ENCODE measurements at regions of chr19 and their contacts with region 1.

Region 1: GRCh38 chr19:46661020-46661731 is at the start of gene DACT3:
- DNase-seq: peak; percentile 98 to 100 (median 100)
- ATAC-seq: peak; percentile 86 to 95 (median 94)
- H3K4me3 ChIP-seq: peak within 1 kb of the TSS; percentile 57 to 77
- H3K4me3 Mint-ChIP-seq: peak within 1 kb of the TSS; percentile 79 to 81 (median 80)
- H3K27ac ChIP-seq: peak within 1 kb of the TSS; percentile 44
- H3K27ac Mint-ChIP-seq: peak within 1 kb of the TSS; percentile 82 to 87
- H3K4me1 ChIP-seq: peaks cover 15 to 30% of the 10 kb centered on the region in 2 experiments
- H3K4me1 Mint-ChIP-seq: peaks cover 18 to 27% (median 23%) of the 10 kb centered on the region in 3 donors
- H3K27me3 ChIP-seq: peaks cover 2 to 40% of the 10 kb centered on the region in 2 experiments
- H3K27me3 Mint-ChIP-seq: peaks cover 17 to 22% of the 10 kb centered on the region in 2 donors
- total RNA-seq, gene DACT3: 0.15 to 0.56 (median 0.37) TPM

Region 2: DNA sequence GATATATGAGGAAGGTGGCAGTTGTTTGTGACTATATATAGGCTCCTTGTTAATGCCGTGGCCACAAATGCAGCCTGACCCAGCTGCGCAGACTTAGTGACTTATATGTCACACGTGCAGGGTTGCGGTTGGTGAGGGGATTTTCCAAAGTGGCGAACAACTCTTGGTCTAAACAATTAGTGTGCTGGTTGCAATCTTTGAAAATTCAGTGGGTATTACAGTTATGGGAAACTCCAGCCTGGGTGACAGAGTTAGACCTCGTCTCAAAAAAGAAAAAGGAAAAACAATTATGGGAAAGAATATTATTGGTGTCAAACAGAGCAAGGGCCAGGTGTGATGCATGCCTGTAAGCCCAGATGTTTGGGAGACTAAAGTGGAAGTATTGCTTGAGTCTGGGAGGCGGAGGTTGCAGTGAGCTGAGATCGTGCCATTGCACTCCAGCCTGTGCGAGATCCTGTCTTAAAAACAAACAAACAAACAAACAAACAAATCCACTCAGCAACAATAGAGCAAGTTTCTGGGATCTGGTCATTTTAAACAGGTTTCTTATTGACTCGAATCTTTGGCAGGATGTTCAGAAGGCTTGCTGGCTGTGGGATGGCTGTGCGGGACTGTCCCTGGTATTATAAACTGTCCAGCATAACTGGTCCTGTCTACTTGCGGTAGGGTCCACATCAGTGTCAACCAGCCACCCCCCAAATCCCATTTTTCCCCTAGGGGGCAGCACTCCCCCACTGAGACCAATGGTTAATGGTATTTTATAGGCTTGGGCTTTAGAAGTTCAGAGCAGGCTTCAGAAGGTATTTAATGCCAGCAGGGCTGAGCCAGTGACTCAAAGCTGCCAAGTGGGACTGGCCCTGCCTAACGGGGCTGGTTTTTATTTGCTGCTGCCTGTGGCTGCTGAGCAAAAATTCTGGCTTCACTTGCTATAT is 1644.5 kb before region 1 on chr19:
- CTCF ChIA-PET with region 1: no interaction called
- POLR2A ChIA-PET with region 1: interaction called in 1 of 2 experiments, 11 read pairs
- DNase-seq: peak; percentile 50 to 92 (median 74)
- ATAC-seq: peak; percentile 69 to 84 (median 74)
- H3K4me3 ChIP-seq: no peak overlapping the region
- H3K4me3 Mint-ChIP-seq: peak overlapping the region; percentile 10 to 65 (median 60)
- H3K27ac ChIP-seq: peak overlapping the region; percentile 87
- H3K27ac Mint-ChIP-seq: peak overlapping the region; percentile 87 to 89
- H3K4me1 ChIP-seq: peaks cover 0 to 20% of the 10 kb centered on the region in 2 experiments
- H3K4me1 Mint-ChIP-seq: peaks cover 7 to 14% (median 11%) of the 10 kb centered on the region in 3 donors
- H3K27me3 ChIP-seq: no peaks in the 10 kb centered on the region
- H3K27me3 Mint-ChIP-seq: no peaks in the 10 kb centered on the region

Region 3: DNA sequence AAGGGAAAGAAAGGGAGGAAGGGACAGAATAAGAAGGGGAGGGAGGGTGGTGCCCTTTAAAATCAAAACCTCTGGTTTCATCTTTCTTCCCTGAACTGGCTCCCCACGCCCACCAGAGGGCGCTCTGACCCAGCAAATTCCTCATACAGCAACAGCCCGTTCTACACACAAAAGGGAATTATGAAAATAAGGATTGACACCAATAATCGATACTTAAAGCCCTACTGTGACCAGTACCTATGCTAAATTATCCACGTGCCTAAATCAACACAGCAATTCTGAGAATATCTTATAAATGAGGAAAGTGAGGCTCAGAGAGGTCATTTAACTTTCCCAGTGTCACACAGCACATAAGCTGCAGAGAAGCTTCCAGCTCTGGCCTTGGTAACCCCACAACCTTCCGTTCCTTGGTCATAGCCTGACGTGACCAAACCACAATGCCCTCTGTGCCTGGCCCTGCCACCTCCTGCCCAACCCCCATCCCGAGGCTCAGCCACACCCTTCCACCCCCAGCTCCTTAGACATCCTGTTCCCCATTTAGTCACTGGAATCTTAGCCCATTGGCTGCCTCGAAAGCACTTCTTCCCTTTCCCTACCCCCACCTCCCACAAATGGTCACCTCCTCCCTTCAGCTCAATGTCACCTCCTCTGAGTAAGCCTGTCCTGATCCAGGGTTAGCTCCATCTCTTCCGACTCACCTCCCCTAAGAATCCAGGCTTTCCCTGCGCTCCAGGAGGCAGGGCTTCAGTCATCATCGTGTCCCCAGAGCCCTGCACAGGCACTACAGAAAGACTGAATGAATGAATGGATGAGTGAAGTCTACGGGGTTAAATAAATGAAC is 131.3 kb before region 1 on chr19:
- CTCF ChIA-PET with region 1: interaction called in 1 of 2 experiments, 14 read pairs
- POLR2A ChIA-PET with region 1: no interaction called
- DNase-seq: peak; percentile 38 to 88 (median 68)
- ATAC-seq: peak; percentile 68 to 88 (median 76)
- H3K4me3 ChIP-seq: no peak overlapping the region
- H3K4me3 Mint-ChIP-seq: no peak overlapping the region
- H3K27ac ChIP-seq: no peak overlapping the region
- H3K27ac Mint-ChIP-seq: peak overlapping the region; percentile 6 to 58
- H3K4me1 ChIP-seq: peaks cover 5 to 17% of the 10 kb centered on the region in 2 experiments
- H3K4me1 Mint-ChIP-seq: peaks cover 22 to 25% (median 23%) of the 10 kb centered on the region in 3 donors
- H3K27me3 ChIP-seq: peaks cover 0 to 33% of the 10 kb centered on the region in 2 experiments
- H3K27me3 Mint-ChIP-seq: no peaks in the 10 kb centered on the region

Region 4: DNA sequence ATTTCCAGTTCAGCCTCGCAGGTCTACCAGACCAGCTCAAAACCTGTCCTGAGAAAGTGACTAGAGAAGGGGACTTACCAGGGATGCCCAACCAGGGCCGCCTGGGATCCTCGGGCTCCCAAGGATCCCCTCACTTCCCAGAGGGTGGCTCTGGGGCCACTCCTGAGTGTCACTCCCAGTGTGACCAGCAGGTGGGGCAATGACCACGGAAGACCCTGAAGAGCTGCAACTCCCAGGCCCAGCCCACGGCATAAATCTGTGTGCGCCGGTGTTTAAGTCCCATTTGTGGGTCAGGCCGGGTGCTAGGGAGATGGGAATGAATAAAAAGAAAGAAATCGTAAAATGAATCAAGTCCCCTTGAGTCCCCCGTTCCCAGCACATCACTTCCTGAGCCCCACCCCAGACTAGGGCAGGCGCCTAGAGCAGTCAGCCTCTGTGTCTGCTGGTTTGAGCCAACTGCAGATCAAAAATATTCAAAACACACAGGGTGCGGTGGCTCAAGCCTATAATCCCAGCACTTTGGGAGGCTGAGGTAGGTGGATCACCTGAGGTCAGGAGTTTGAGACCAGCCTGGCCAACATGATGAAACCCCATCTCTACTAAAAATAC is 47.0 kb before region 1 on chr19:
- CTCF ChIA-PET with region 1: interaction called, 7 to 40 read pairs
- POLR2A ChIA-PET with region 1: interaction called in 1 of 2 experiments, 3 read pairs
- DNase-seq: peak in 34 of 35 experiments; percentile 54 to 88 (median 74)
- ATAC-seq: peak; percentile 53 to 59 (median 57)
- H3K4me3 ChIP-seq: no peak overlapping the region
- H3K4me3 Mint-ChIP-seq: peak overlapping the region in 2 of 3 donors; percentile 38 to 39
- H3K27ac ChIP-seq: peak overlapping the region; percentile 13
- H3K27ac Mint-ChIP-seq: peak overlapping the region; percentile 72 to 88
- H3K4me1 ChIP-seq: peaks cover 52 to 87% of the 10 kb centered on the region in 2 experiments
- H3K4me1 Mint-ChIP-seq: peaks cover 61 to 78% (median 71%) of the 10 kb centered on the region in 3 donors
- H3K27me3 ChIP-seq: peaks cover 0 to 5% of the 10 kb centered on the region in 2 experiments
- H3K27me3 Mint-ChIP-seq: no peaks in the 10 kb centered on the region

Region 5: GRCh38 chr19:46634045-46634655 is 27.0 kb before region 1 on chr19:
- CTCF ChIA-PET with region 1: interaction called, 3 to 12 read pairs
- POLR2A ChIA-PET with region 1: no interaction called
- DNase-seq: peak; percentile 90 to 98 (median 94)
- ATAC-seq: peak; percentile 72 to 81 (median 78)
- H3K4me3 ChIP-seq: peak overlapping the region; percentile 42 to 49
- H3K4me3 Mint-ChIP-seq: peak overlapping the region in 2 of 3 donors; percentile 72 to 74
- H3K27ac ChIP-seq: peak overlapping the region; percentile 79
- H3K27ac Mint-ChIP-seq: peak overlapping the region in 1 of 2 donors; percentile 65
- H3K4me1 ChIP-seq: peaks cover 26 to 50% of the 10 kb centered on the region in 2 experiments
- H3K4me1 Mint-ChIP-seq: peaks cover 14 to 23% (median 20%) of the 10 kb centered on the region in 3 donors
- H3K27me3 ChIP-seq: peaks cover 0 to 50% of the 10 kb centered on the region in 2 experiments
- H3K27me3 Mint-ChIP-seq: peaks cover 0 to 4% of the 10 kb centered on the region in 2 donors

Region 6: DNA sequence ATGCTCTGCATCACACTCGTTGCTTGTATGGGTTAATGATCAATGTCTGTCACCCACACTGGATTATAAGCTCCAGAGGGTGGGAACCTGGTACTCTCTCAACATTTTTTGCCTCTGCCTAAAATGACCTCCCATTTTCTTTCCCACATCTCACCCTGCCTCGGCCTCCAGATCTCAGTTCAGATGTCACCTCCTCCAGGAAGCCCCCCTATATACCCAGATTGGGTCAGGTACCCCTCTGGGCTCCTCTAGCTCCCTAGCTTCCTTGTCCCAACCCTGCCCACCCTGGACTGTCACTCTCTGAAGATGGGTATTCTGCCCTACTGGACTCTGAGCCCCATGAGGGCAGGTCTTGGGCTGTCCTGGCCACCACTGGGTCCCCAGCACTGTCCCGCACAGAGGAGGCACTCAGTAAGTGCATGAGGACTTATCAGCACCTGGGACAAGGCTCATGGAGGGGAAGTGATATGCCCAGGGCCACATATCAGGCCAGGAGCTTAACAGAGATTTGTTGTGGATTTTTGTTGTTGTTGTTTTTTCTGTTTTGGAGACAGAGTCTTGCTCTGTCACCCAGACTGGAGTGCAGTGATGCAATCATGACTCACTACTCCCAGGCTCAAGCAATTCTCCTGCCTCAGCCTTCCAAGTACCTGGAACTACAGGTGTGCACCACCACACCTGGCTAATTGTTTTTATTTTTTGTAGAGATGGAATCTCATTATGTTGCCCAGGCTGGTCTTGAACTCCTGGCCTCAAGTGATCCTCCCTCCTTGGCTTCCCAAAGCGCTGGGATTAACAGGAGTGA is 31.9 kb after region 1 on chr19:
- CTCF ChIA-PET with region 1: no interaction called
- POLR2A ChIA-PET with region 1: no interaction called
- DNase-seq: no peak
- ATAC-seq: no peak
- H3K4me3 ChIP-seq: no peak overlapping the region
- H3K4me3 Mint-ChIP-seq: no peak overlapping the region
- H3K27ac ChIP-seq: no peak overlapping the region
- H3K27ac Mint-ChIP-seq: peak overlapping the region; percentile 73 to 75
- H3K4me1 ChIP-seq: peaks cover 0 to 2% of the 10 kb centered on the region in 2 experiments
- H3K4me1 Mint-ChIP-seq: peaks cover 2 to 12% (median 3%) of the 10 kb centered on the region in 3 donors
- H3K27me3 ChIP-seq: no peaks in the 10 kb centered on the region
- H3K27me3 Mint-ChIP-seq: no peaks in the 10 kb centered on the region

Region 7: DNA sequence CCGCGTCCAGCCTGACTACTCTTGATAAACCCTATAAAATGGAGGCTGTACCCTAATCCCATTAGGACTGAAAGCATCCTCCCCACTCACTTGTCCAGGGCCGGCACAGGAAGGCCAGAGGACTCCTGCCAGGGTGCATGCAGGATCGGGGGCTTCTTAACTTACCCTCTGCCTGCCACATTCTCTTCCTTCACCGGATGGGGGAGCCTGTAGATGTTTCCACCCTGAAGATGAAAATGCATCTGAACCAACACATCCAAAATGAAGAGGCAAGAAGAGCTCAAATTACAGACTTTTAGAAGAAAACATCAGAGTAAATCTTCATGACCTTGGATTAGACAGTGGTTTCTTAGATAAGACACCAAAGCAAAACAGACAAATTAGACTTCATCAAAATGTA is 879.6 kb after region 1 on chr19:
- CTCF ChIA-PET with region 1: no interaction called
- POLR2A ChIA-PET with region 1: no interaction called
- DNase-seq: peak in 1 of 35 experiments; percentile 46
- ATAC-seq: no peak
- H3K4me3 ChIP-seq: no peak overlapping the region
- H3K4me3 Mint-ChIP-seq: no peak overlapping the region
- H3K27ac ChIP-seq: peak overlapping the region; percentile 67
- H3K27ac Mint-ChIP-seq: peak overlapping the region in 1 of 2 donors; percentile 2
- H3K4me1 ChIP-seq: peaks cover 2 to 49% of the 10 kb centered on the region in 2 experiments
- H3K4me1 Mint-ChIP-seq: peaks cover 17 to 28% (median 19%) of the 10 kb centered on the region in 3 donors
- H3K27me3 ChIP-seq: peaks cover 0 to 32% of the 10 kb centered on the region in 2 experiments
- H3K27me3 Mint-ChIP-seq: peaks cover 0 to 6% of the 10 kb centered on the region in 2 donors